ENCODE measurements at regions of chr19 and their contacts with region 1.

Region 1: GRCh38 chr19:46361915-46362314 is 15.0 kb downstream of the PPP5C start:
- DNase-seq: peak in 6 of 9 donors; percentile 37 to 73 (median 68)
- ATAC-seq: peak; percentile 70
- H3K4me3 ChIP-seq: peak overlapping the region; percentile 25
- H3K4me3 Mint-ChIP-seq: peak overlapping the region; percentile 64 to 92 (median 80)
- H3K27ac ChIP-seq: no peak overlapping the region
- H3K27ac Mint-ChIP-seq: peak overlapping the region in 6 of 9 donors; percentile 9 to 63 (median 28)
- H3K4me1 ChIP-seq: peaks cover 8 to 10% of the 10 kb centered on the region in 2 donors
- H3K4me1 Mint-ChIP-seq: peaks cover 22 to 72% (median 59%) of the 10 kb centered on the region in 7 donors
- H3K27me3 ChIP-seq: no peaks in the 10 kb centered on the region
- H3K27me3 Mint-ChIP-seq: no peaks in the 10 kb centered on the region

Region 2: GRCh38 chr19:46115396-46116106 is 246.4 kb before region 1 on chr19:
- CTCF ChIA-PET with region 1: no interaction called
- POLR2A ChIA-PET with region 1: no interaction called
- intact Hi-C with region 1: no loop called
- DNase-seq: peak in 1 of 9 donors; percentile 54
- ATAC-seq: no peak
- H3K4me3 ChIP-seq: no peak overlapping the region
- H3K4me3 Mint-ChIP-seq: peak overlapping the region in 1 of 10 donors; percentile 26
- H3K27ac ChIP-seq: no peak overlapping the region
- H3K27ac Mint-ChIP-seq: no peak overlapping the region
- H3K4me1 ChIP-seq: no peaks in the 10 kb centered on the region
- H3K4me1 Mint-ChIP-seq: peaks cover 0 to 10% (median 0%) of the 10 kb centered on the region in 7 donors
- H3K27me3 ChIP-seq: peaks cover 3 to 9% of the 10 kb centered on the region in 2 donors
- H3K27me3 Mint-ChIP-seq: peaks cover 35 to 49% (median 37%) of the 10 kb centered on the region in 5 donors

Region 3: GRCh38 chr19:46346821-46347571 is 14.9 kb before region 1 on chr19 and contains the start of gene PPP5C:
- CTCF ChIA-PET with region 1: interaction called, 8 read pairs
- POLR2A ChIA-PET with region 1: no interaction called
- intact Hi-C with region 1: loop called (anchors 1 kb)
- DNase-seq: peak; percentile 74 to 89 (median 79)
- ATAC-seq: peak; percentile 90
- H3K4me3 ChIP-seq: peak within 1 kb of the TSS; percentile 73
- H3K4me3 Mint-ChIP-seq: peak within 1 kb of the TSS; percentile 87 to 97 (median 94)
- H3K27ac ChIP-seq: peak within 1 kb of the TSS; percentile 89
- H3K27ac Mint-ChIP-seq: peak within 1 kb of the TSS; percentile 85 to 97 (median 92)
- H3K4me1 ChIP-seq: peaks cover 39 to 43% of the 10 kb centered on the region in 2 donors
- H3K4me1 Mint-ChIP-seq: peaks cover 49 to 63% (median 52%) of the 10 kb centered on the region in 7 donors
- H3K27me3 ChIP-seq: no peaks in the 10 kb centered on the region
- H3K27me3 Mint-ChIP-seq: peaks cover 0 to 23% (median 0%) of the 10 kb centered on the region in 5 donors
- total RNA-seq, gene PPP5C: 41.4 to 107 (median 52.0) TPM

Region 4: DNA sequence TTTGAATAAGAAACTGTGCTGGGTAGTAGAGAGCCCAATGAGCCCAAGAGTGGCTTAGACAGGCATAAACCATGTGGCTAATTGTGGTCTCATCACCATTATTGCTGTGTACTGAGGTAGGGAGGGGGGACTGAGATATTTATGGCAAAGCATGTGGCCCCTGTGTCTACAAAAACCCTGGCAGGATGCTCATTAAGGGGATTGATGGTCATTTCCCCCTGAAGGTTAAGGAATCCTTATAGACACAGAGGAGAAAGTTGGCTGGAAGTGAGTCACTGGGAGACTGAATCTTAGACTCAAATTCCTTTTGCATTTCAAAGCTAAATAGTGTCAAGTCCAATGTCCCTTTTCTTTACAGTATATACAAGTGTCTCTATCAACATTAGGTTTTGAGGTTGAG is 308.9 kb after region 1 on chr19:
- CTCF ChIA-PET with region 1: no interaction called
- POLR2A ChIA-PET with region 1: no interaction called
- intact Hi-C with region 1: no loop called
- DNase-seq: no peak
- ATAC-seq: no peak
- H3K4me3 ChIP-seq: no peak overlapping the region
- H3K4me3 Mint-ChIP-seq: no peak overlapping the region
- H3K27ac ChIP-seq: no peak overlapping the region
- H3K27ac Mint-ChIP-seq: peak overlapping the region in 3 of 9 donors; percentile 32 to 55 (median 38)
- H3K4me1 ChIP-seq: no peaks in the 10 kb centered on the region
- H3K4me1 Mint-ChIP-seq: peaks cover 0 to 7% (median 0%) of the 10 kb centered on the region in 7 donors
- H3K27me3 ChIP-seq: no peaks in the 10 kb centered on the region
- H3K27me3 Mint-ChIP-seq: no peaks in the 10 kb centered on the region

Measured in naive thymus-derived CD4-positive, alpha-beta T cell (primary cell).